B cell (primary cell): ENCODE measurements at regions of chr11 and their contacts with region 1.

Region 1: GRCh38 chr11:44611687-44612434 is 46.4 kb downstream of the CD82 start:
- DNase-seq: peak; percentile 94
- ATAC-seq: peak; percentile 51
- H3K4me3 ChIP-seq: peak overlapping the region in 2 of 5 experiments; percentile 2 to 40
- H3K4me3 Mint-ChIP-seq: peak overlapping the region; percentile 59
- H3K27ac ChIP-seq: peak overlapping the region; percentile 97 to 99
- H3K27ac Mint-ChIP-seq: peak overlapping the region; percentile 96
- H3K4me1 ChIP-seq: peaks cover 97 to 100% of the 10 kb centered on the region in 2 donors
- H3K4me1 Mint-ChIP-seq: peaks cover 97% of the 10 kb centered on the region
- H3K27me3 ChIP-seq: no peaks in the 10 kb centered on the region
- H3K27me3 Mint-ChIP-seq: no peaks in the 10 kb centered on the region
- CTCF ChIP-seq: no peak

Region 2: GRCh38 chr11:45079943-45080719 is 468.3 kb after region 1 on chr11:
- CTCF ChIA-PET with region 1: no interaction called
- POLR2A ChIA-PET with region 1: no interaction called
- intact Hi-C with region 1: loop called (anchors 5 kb)
- DNase-seq: peak; percentile 78
- ATAC-seq: peak; percentile 59
- H3K4me3 ChIP-seq: peak overlapping the region in 2 of 5 experiments; percentile 5 to 6
- H3K4me3 Mint-ChIP-seq: peak overlapping the region; percentile 71
- H3K27ac ChIP-seq: peak overlapping the region; percentile 65 to 73
- H3K27ac Mint-ChIP-seq: peak overlapping the region; percentile 93
- H3K4me1 ChIP-seq: peaks cover 52 to 65% of the 10 kb centered on the region in 2 donors
- H3K4me1 Mint-ChIP-seq: peaks cover 74% of the 10 kb centered on the region
- H3K27me3 ChIP-seq: no peaks in the 10 kb centered on the region
- H3K27me3 Mint-ChIP-seq: no peaks in the 10 kb centered on the region
- CTCF ChIP-seq: no peak